ENCODE measurements at regions of chr11 and their contacts with region 1.

Region 1: DNA sequence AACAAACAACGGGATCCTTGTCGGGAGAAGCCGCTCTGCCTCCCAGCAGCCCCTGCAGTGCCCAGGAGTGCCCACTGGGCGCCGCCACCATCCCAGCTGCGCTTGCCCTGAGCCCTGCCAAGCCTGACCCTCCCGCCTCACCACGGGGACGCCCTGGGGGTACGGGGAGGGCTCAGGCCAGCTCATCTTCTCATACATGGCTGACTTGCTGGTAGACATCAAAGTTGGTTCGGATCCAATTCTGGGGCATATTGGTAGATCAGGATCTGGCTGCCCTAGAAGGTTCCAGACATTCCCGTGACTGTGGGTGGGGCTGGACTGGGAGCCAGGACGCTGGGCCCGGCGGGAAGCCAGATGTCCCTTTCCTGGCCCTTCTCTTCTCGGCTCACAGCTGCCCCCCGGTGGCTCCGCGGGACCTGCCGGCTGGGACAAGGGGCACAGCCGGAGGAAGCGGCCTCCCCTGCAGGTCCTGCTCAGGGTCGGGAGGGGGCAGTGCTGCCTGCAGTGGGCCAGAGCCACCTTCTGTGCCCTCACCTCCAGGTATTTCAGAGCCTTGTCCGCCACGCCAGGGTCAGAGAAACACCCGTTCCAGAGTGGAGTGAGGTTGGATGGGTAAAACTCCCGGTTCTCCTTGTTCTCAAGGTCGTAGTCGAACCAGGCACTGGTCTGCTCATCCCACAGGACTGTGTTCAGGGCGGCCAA is 10.6 kb upstream of the TREH start:
- DNase-seq: peak; percentile 82 to 96
- ATAC-seq: peak; percentile 95 to 98 (median 97)
- H3K4me3 ChIP-seq: peak overlapping the region; percentile 69
- H3K27ac ChIP-seq: peak overlapping the region; percentile 80
- H3K4me1 ChIP-seq: peaks cover 11% of the 10 kb centered on the region
- H3K27me3 ChIP-seq: no peaks in the 10 kb centered on the region
- CTCF ChIP-seq: peak; percentile 76

Region 2: GRCh38 chr11:118791111-118791965 is 101.3 kb after region 1 on chr11 and contains the start of gene DDX6:
- intact Hi-C with region 1: loop called in 1 of 2 experiments (anchors 5 kb)
- DNase-seq: peak; percentile 92 to 96
- ATAC-seq: peak; percentile 87 to 91 (median 89)
- H3K4me3 ChIP-seq: peak within 1 kb of the TSS; percentile 89
- H3K27ac ChIP-seq: peak within 1 kb of the TSS; percentile 97
- H3K4me1 ChIP-seq: peaks cover 23% of the 10 kb centered on the region
- H3K27me3 ChIP-seq: no peaks in the 10 kb centered on the region
- CTCF ChIP-seq: peak; percentile 39
- total RNA-seq, gene DDX6: 77.6 to 90.9 (median 79.0) TPM

Region 3: GRCh38 chr11:118956094-118956846 is 266.3 kb after region 1 on chr11 and contains the start of gene UPK2:
- intact Hi-C with region 1: loop called (anchors 2 kb)
- DNase-seq: peak; percentile 88 to 95
- ATAC-seq: peak; percentile 97 to 100 (median 99)
- H3K4me3 ChIP-seq: no peak within 1 kb of the TSS
- H3K27ac ChIP-seq: no peak within 1 kb of the TSS
- H3K4me1 ChIP-seq: no peaks in the 10 kb centered on the region
- H3K27me3 ChIP-seq: peaks cover 0 to 5% (median 3%) of the 10 kb centered on the region in 3 donors
- CTCF ChIP-seq: peak; percentile 94
- total RNA-seq, gene UPK2: not detected